Activated CD4-positive, alpha-beta T cell treated with anti-CD3 and anti-CD28 coated beads for 36 hours (primary cell): ENCODE measurements at regions of chr22 and their contacts with region 1.

Region 1: GRCh38 chr22:43385770-43386641 is 25.8 kb upstream of the MPPED1 start:
- DNase-seq: peak; percentile 85
- ATAC-seq: peak; percentile 93
- H3K4me3 Mint-ChIP-seq: no peak overlapping the region
- H3K27ac Mint-ChIP-seq: no peak overlapping the region
- H3K4me1 Mint-ChIP-seq: no peaks in the 10 kb centered on the region
- H3K27me3 Mint-ChIP-seq: peaks cover 12% of the 10 kb centered on the region

Region 2: GRCh38 chr22:43273902-43274484 is 112.0 kb before region 1 on chr22:
- CTCF ChIA-PET with region 1: interaction called, 5 read pairs
- POLR2A ChIA-PET with region 1: no interaction called
- intact Hi-C with region 1: loop called (anchors 1 kb)
- DNase-seq: peak; percentile 60
- ATAC-seq: peak; percentile 71
- H3K4me3 Mint-ChIP-seq: no peak overlapping the region
- H3K27ac Mint-ChIP-seq: no peak overlapping the region
- H3K4me1 Mint-ChIP-seq: no peaks in the 10 kb centered on the region
- H3K27me3 Mint-ChIP-seq: no peaks in the 10 kb centered on the region

Region 3: GRCh38 chr22:43481568-43482317 is 95.7 kb after region 1 on chr22:
- CTCF ChIA-PET with region 1: no interaction called
- POLR2A ChIA-PET with region 1: no interaction called
- intact Hi-C with region 1: loop called in 1 of 2 experiments (anchors 1 kb)
- DNase-seq: peak; percentile 47
- ATAC-seq: peak; percentile 74
- H3K4me3 Mint-ChIP-seq: peak overlapping the region; percentile 32
- H3K27ac Mint-ChIP-seq: peak overlapping the region; percentile 57
- H3K4me1 Mint-ChIP-seq: peaks cover 14% of the 10 kb centered on the region
- H3K27me3 Mint-ChIP-seq: peaks cover under 1% of the 10 kb centered on the region

Region 4: DNA sequence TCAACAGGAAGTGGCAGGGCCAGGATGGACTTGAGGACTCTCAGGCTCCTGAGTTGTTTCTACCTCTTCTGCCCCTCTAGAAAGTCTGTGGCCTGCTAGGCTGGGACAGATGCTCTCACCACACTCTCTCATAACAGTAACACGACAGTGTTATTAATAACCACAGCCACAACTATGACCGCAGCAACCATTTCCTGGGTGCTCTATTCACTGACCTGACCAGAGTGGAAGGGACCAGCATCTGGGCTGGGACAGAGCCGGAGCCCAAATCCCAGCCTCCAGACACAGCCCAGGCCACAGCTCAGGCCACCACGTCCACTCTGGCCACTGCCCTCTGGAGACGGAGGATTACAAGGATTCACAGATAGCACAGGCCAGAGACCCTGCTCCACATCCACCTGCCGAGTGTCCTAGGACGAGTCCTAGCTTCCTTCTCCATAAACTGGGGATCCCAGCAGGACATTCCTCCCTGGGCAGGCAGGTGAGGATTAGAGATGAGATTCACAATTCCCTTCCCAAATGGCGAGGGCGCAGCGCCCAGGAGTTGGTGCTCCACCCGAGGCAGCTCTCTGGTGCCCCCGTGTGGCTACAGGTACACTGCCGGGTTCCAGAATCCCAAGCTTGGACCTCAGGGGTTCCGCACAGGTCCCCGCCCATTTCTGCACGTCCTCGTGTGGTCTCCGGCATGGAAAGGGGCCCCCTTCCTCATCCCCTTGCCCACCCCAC is 498.8 kb after region 1 on chr22:
- CTCF ChIA-PET with region 1: no interaction called
- POLR2A ChIA-PET with region 1: no interaction called
- intact Hi-C with region 1: loop called in 1 of 2 experiments (anchors 2 kb)
- DNase-seq: peak; percentile 77
- ATAC-seq: peak; percentile 31
- H3K4me3 Mint-ChIP-seq: no peak overlapping the region
- H3K27ac Mint-ChIP-seq: no peak overlapping the region
- H3K4me1 Mint-ChIP-seq: no peaks in the 10 kb centered on the region
- H3K27me3 Mint-ChIP-seq: peaks cover 15% of the 10 kb centered on the region